ENCODE measurements at regions of chr21 and their contacts with region 1.

Region 1: GRCh38 chr21:35932232-35932911 is 128.0 kb downstream of the SETD4 start:
- DNase-seq: peak; percentile 58 to 61
- ATAC-seq: peak; percentile 83 to 92 (median 88)
- H3K4me3 ChIP-seq: no peak overlapping the region
- H3K27ac ChIP-seq: peak overlapping the region; percentile 65
- H3K4me1 ChIP-seq: peaks cover 9% of the 10 kb centered on the region
- H3K27me3 ChIP-seq: peaks cover 0 to 6% (median 2%) of the 10 kb centered on the region in 3 donors
- CTCF ChIP-seq: no peak

Region 2: GRCh38 chr21:34754690-34755647 is 1177.4 kb before region 1 on chr21:
- intact Hi-C with region 1: loop called in 1 of 2 experiments (anchors 10 kb)
- DNase-seq: no peak
- ATAC-seq: no peak
- H3K4me3 ChIP-seq: no peak overlapping the region
- H3K27ac ChIP-seq: no peak overlapping the region
- H3K4me1 ChIP-seq: no peaks in the 10 kb centered on the region
- H3K27me3 ChIP-seq: no peaks in the 10 kb centered on the region
- CTCF ChIP-seq: no peak

Region 3: GRCh38 chr21:35850029-35850428 is 82.3 kb before region 1 on chr21:
- intact Hi-C with region 1: loop called in 1 of 2 experiments (anchors 5 kb)
- DNase-seq: no peak
- ATAC-seq: peak; percentile 58 to 74 (median 59)
- H3K4me3 ChIP-seq: no peak overlapping the region
- H3K27ac ChIP-seq: no peak overlapping the region
- H3K4me1 ChIP-seq: peaks cover 5% of the 10 kb centered on the region
- H3K27me3 ChIP-seq: peaks cover 0 to 6% (median 0%) of the 10 kb centered on the region in 3 donors
- CTCF ChIP-seq: no peak

Measured in psoas muscle (tissue), 8 donors.